Transverse colon (tissue), 4 donors: ENCODE measurements at regions of chr12 and their contacts with region 1.

Region 1: GRCh38 chr12:3299929-3300832 is 190.8 kb upstream of the PRMT8 start:
- DNase-seq: peak; percentile 90
- H3K4me3 ChIP-seq: peak overlapping the region in 3 of 4 donors; percentile 0 to 36 (median 10)
- H3K27ac ChIP-seq: peak overlapping the region; percentile 24 to 81 (median 73)
- H3K4me1 ChIP-seq: peaks cover 0 to 11% (median 7%) of the 10 kb centered on the region in 4 donors
- H3K27me3 ChIP-seq: peaks cover 8% of the 10 kb centered on the region
- CTCF ChIP-seq: peak; percentile 89 to 97 (median 94)
- EP300 ChIP-seq: no peak
- POLR2A ChIP-seq: peak; percentile 16

Region 2: DNA sequence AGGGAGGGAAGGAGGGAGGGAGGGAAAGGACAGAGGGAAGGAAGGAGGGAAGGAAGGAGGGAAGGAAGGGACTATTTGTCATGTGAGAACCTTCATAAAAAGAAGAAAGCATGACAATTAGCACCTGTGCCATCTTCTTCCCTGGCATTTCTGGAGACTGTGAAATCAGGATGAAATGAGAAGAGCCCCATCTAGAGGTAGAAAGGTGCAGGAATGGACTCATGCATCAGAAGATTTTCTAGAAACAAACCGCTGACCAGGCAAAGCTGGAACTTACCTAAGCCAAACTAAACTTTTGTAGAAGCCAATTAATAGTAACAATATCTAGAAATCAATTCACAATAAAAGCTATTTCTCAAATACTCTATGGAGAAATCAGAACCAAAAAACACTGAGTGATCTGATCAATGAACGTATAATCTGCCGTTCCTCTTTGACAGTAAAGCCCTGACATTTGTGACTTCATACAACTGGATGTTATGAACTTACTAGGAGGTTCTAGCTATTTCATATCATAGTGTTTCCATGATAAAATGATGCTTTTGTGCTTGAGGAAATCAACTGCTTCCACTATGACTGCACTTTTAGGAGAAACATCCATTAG is 477.1 kb after region 1 on chr12:
- in situ Hi-C with region 1: loop called in 1 of 4 experiments (anchors 25 kb)
- intact Hi-C with region 1: loop called (anchors 10 kb)
- DNase-seq: no peak
- H3K4me3 ChIP-seq: no peak overlapping the region
- H3K27ac ChIP-seq: no peak overlapping the region
- H3K4me1 ChIP-seq: no peaks in the 10 kb centered on the region
- H3K27me3 ChIP-seq: no peaks in the 10 kb centered on the region
- CTCF ChIP-seq: peak; percentile 58 to 75 (median 67)
- EP300 ChIP-seq: no peak
- POLR2A ChIP-seq: no peak

Region 3: DNA sequence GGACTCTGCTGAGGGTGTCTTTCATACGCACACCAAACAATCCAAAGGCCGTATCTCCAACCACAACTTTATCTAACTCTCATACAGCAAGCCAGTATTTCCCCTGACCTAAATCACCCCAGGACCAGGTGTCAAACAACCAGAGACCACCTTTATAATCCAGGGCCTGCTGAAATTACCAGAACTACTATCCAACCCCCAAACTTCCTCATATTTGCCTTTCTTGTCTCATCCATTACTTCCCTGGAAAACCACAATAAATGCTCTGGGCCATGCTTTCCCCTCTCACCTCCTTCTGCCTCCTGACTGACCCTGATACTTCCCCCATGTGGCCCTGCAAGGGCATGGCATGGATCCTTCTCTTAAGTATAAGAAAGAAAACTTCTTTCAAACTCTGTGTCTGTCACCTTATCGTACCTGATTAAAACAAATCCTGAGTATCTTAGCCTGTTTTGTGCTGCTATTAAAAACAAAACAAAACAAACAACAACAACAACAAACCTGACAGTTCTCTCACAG is 497.4 kb after region 1 on chr12:
- in situ Hi-C with region 1: loop called (anchors 10 to 25 kb)
- intact Hi-C with region 1: no loop called
- DNase-seq: no peak
- H3K4me3 ChIP-seq: no peak overlapping the region
- H3K27ac ChIP-seq: no peak overlapping the region
- H3K4me1 ChIP-seq: no peaks in the 10 kb centered on the region
- H3K27me3 ChIP-seq: no peaks in the 10 kb centered on the region
- CTCF ChIP-seq: no peak
- EP300 ChIP-seq: no peak
- POLR2A ChIP-seq: no peak

Region 4: DNA sequence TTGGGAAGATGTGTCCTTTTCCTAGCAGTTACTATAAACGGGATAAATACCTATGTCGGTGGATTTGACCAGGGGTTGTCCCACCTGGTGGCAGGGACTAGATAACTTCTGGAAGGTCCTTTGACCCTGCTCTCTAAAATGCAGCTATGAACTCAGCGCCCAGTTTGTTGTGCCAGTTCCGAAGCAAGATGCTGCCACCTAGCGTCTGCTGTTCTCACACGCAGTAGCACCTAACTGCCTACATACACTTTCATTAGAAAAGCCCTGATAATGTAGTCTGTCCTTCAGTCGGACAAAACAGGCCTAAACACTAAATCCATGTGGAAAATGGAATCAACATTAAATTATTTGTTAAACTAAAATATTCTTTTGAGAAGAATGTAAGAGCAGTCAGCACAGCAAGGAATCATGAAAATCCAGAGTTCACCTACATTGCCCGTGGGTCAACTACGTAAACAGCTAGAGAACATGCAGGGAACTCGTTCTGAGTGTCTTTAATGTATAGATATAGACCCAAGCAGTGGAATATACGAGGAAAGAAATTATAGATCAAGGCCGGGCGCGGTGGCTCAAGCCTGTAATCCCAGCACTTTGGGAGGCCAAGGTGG is 503.8 kb after region 1 on chr12:
- in situ Hi-C with region 1: loop called (anchors 10 to 25 kb)
- intact Hi-C with region 1: loop called (anchors 2 kb)
- DNase-seq: peak; percentile 79
- H3K4me3 ChIP-seq: no peak overlapping the region
- H3K27ac ChIP-seq: no peak overlapping the region
- H3K4me1 ChIP-seq: no peaks in the 10 kb centered on the region
- H3K27me3 ChIP-seq: no peaks in the 10 kb centered on the region
- CTCF ChIP-seq: peak; percentile 73 to 83 (median 80)
- EP300 ChIP-seq: no peak
- POLR2A ChIP-seq: no peak